Activated CD8-positive, alpha-beta T cell treated with anti-CD3 and anti-CD28 coated beads, Interleukin-2, amount 10 ng/mL, durations not matched to agents 7 days and 5 days (primary cell): ENCODE measurements at regions of chr14 and their contacts with region 1.

Region 1: DNA sequence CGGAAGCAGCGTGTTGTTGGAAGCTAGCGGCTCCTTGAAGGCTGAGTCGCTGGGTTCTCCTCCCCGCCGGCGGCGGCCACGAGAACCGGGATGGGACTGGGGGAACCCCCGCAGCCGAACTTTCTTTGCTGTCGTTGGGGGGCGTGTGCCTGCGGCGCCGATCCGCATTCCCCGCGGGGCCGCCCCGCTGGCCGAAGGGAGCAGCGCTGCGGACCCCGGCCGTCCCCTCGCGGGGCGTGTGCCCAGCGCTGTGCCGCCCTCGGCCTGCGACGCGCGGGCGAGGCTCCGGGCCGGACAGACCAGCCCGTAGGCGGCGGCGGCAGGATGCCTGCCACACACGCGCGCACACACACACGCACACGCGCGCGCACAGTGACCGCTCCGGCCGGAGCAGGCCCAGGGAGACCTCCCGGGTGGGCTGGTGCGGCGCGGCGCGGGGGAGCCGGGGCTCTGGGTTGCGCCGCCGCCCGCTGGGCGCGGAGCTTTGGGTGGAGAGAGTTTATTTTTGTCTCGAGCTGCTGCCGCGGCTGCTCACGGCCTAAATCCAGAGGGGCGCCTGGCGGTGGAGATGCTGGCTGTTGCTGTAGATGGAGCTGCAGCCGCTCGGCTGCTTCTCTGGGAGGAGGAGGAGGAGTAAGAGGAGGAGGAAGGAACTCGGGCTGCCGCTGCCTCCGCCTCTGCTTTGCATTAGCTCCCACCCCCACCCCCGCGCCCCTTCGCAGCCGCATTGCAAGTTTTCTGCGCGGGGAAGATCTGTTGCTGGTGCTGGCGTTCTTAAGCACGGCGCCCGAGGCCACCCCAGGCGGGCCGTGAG is at the start of gene SAMD4A:
- DNase-seq: peak; percentile 75
- ATAC-seq: peak; percentile 45
- H3K4me3 Mint-ChIP-seq: peak within 1 kb of the TSS; percentile 94
- H3K27ac Mint-ChIP-seq: peak within 1 kb of the TSS; percentile 87
- H3K4me1 Mint-ChIP-seq: peaks cover 23% of the 10 kb centered on the region
- H3K27me3 Mint-ChIP-seq: peaks cover 21% of the 10 kb centered on the region
- total RNA-seq, gene SAMD4A: 3.6 to 3.9 TPM

Region 2: GRCh38 chr14:54627540-54628363 is 61.1 kb after region 1 on chr14:
- CTCF ChIA-PET with region 1: interaction called, 11 read pairs
- POLR2A ChIA-PET with region 1: interaction called, 4 read pairs
- DNase-seq: peak; percentile 61
- ATAC-seq: peak; percentile 77
- H3K4me3 Mint-ChIP-seq: peak overlapping the region; percentile 75
- H3K27ac Mint-ChIP-seq: peak overlapping the region; percentile 90
- H3K4me1 Mint-ChIP-seq: peaks cover 44% of the 10 kb centered on the region
- H3K27me3 Mint-ChIP-seq: no peaks in the 10 kb centered on the region

Region 3: GRCh38 chr14:54669721-54670561 is 103.3 kb after region 1 on chr14:
- CTCF ChIA-PET with region 1: interaction called, 14 read pairs
- POLR2A ChIA-PET with region 1: interaction called, 3 read pairs
- DNase-seq: peak; percentile 40
- ATAC-seq: peak; percentile 65
- H3K4me3 Mint-ChIP-seq: no peak overlapping the region
- H3K27ac Mint-ChIP-seq: peak overlapping the region; percentile 10
- H3K4me1 Mint-ChIP-seq: peaks cover 35% of the 10 kb centered on the region
- H3K27me3 Mint-ChIP-seq: peaks cover 45% of the 10 kb centered on the region

Region 4: DNA sequence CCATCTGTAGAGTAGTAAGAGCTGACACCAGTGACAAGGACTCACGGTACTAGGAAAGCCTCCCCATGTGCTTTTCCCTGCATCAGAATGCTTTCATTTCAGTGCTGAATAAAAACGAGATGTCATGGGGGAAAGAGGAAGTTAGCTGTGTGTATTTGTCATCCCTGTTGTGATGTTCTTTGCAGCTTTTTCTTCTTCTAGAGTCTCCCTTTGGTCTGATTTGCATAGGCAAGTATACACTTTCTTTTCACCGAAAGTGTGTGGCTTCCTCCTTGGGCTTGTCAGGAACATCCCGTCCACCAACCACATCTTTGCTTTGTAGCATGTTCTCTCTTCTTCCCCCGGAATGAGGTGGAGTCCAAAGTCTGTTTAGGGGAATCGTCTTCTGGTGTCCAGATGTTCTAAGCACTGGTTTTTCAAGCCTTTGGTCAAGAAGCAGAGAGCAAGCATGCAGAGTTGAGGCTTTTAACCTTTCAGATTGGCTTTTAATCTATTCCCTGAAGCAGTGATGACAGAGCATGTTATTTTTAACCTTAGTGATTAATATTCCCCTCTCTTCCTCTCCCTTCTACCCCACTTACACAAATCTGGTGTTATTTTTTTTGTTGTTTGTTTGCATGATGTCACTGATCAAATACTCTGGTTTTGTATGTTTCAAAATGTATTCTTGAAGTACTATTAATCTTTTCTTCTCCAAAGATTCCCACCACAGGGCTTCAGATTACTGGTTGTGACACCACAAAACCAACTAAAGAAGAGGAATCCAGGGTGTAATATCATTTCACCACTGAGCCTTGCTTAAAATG is 163.7 kb after region 1 on chr14:
- CTCF ChIA-PET with region 1: interaction called, 133 read pairs
- POLR2A ChIA-PET with region 1: interaction called, 4 read pairs
- DNase-seq: peak; percentile 55
- ATAC-seq: peak; percentile 83
- H3K4me3 Mint-ChIP-seq: peak overlapping the region; percentile 65
- H3K27ac Mint-ChIP-seq: peak overlapping the region; percentile 88
- H3K4me1 Mint-ChIP-seq: peaks cover 64% of the 10 kb centered on the region
- H3K27me3 Mint-ChIP-seq: no peaks in the 10 kb centered on the region

Region 5: DNA sequence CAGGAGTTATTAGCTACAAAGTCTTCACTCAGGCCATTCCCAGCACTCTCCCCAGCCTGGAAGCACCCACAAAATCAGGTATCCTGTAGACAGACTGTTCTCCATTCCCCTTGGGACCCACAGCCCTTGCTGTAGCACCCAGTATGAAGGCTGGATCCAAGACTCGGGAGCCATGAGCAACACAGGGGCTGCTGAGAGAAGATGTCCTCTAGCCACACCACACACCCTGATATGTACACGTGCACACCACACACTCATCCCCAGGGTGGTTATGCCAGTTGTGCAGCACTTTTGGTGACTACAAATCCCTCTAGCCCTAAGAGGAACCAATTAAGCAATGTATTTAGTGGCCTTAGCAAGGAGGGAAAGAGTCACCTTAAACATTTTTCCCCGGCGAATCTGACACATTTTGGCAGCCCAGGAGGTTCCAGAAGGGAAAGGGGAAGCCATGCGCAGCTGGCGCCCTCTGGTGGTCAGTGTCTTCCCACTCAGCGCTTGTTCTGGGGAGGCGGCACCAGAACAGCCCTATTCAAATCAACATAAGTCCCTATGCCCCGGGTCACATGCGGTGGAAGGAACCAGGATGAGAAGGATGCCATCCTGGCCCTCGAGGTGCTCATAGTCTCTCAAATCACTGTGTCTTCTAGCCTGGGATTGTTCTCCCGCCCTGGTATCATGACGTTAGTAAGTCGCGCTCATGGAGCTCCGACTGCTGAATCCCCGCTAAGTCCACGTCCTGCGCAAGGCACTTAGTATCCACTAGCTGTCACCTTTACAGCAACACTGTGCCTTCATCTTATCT is 239.1 kb after region 1 on chr14:
- CTCF ChIA-PET with region 1: interaction called, 33 read pairs
- POLR2A ChIA-PET with region 1: no interaction called
- DNase-seq: peak; percentile 83
- ATAC-seq: peak; percentile 92
- H3K4me3 Mint-ChIP-seq: no peak overlapping the region
- H3K27ac Mint-ChIP-seq: no peak overlapping the region
- H3K4me1 Mint-ChIP-seq: peaks cover 5% of the 10 kb centered on the region
- H3K27me3 Mint-ChIP-seq: peaks cover 29% of the 10 kb centered on the region

Region 6: GRCh38 chr14:54985156-54985555 is 418.5 kb after region 1 on chr14:
- CTCF ChIA-PET with region 1: no interaction called
- POLR2A ChIA-PET with region 1: no interaction called
- DNase-seq: no peak
- ATAC-seq: no peak
- H3K4me3 Mint-ChIP-seq: no peak overlapping the region
- H3K27ac Mint-ChIP-seq: no peak overlapping the region
- H3K4me1 Mint-ChIP-seq: no peaks in the 10 kb centered on the region
- H3K27me3 Mint-ChIP-seq: no peaks in the 10 kb centered on the region